ENCODE measurements at regions of chr18 and their contacts with region 1.

Region 1: DNA sequence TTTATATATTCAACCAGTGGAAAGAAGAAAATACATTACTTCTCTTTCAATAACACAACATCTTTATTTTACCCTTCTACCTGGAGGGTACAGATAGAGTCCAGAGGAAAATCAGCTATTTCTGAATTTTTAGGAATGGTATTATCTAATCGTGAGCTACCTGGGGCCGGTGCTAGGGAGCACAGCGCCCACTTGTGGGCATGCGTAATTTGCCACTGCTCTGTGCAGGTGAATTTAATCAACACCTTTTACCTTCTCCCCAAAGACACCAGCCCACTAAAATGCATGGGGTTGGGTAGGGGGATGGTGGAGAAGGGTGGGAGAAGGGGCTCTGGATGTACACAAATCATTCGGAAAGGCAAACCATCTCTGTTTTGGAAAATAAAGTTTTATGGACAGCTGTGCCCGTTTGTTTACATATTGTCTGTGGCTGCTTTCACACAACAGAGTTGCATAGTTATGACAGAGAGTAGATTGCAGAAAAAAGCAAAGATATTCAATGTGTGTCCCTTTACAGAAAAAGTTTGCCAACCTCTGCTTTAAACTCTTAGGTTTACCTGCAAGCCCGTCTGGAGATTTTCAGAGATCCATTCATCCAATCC is 51.5 kb upstream of the DCC start:
- DNase-seq: peak; percentile 13
- ATAC-seq: no peak
- H3K4me3 ChIP-seq: no peak overlapping the region
- H3K4me3 Mint-ChIP-seq: no peak overlapping the region
- H3K27ac ChIP-seq: no peak overlapping the region
- H3K27ac Mint-ChIP-seq: no peak overlapping the region
- H3K4me1 ChIP-seq: no peaks in the 10 kb centered on the region
- H3K4me1 Mint-ChIP-seq: no peaks in the 10 kb centered on the region
- H3K27me3 ChIP-seq: no peaks in the 10 kb centered on the region
- H3K27me3 Mint-ChIP-seq: no peaks in the 10 kb centered on the region
- CTCF ChIP-seq: peak; percentile 56

Region 2: DNA sequence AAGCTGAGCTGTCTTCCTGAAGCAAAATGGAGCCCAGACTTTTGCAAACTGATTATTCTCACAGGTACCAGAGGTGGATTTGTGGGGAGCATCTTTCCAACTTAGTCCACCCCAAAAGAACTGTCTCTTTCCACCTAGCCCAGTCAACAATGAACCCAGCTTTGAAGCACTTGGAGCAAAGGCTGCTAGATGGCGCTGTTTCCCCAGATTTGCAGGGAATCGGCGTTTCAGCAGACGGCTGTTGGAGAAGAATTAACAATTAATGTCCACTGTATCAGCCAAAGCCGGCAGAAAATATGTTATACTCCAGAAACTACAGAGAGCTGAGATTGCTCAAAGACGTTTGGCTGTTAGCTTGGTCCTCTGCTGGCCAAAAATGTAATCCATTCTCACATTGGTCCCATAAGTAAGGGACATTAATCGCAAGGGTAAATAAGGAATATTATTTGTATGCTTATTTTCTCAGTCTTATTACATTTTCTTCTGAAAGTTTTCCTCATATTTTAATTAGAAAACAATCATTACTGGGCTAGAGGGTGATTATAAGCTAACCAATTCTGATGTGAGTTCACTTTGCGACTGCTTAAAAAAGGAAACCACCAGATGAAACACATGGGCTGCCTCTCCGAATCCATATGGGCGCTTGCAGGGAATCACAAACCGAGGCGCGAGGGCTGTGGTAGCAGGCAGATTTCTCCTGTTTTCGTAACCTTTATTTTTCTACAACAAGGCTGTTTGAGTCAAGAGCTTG is 667.2 kb before region 1 on chr18:
- CTCF ChIA-PET with region 1: no interaction called
- POLR2A ChIA-PET with region 1: no interaction called
- intact Hi-C with region 1: loop called (anchors 5 kb)
- DNase-seq: peak; percentile 11
- ATAC-seq: no peak
- H3K4me3 ChIP-seq: no peak overlapping the region
- H3K4me3 Mint-ChIP-seq: no peak overlapping the region
- H3K27ac ChIP-seq: no peak overlapping the region
- H3K27ac Mint-ChIP-seq: no peak overlapping the region
- H3K4me1 ChIP-seq: no peaks in the 10 kb centered on the region
- H3K4me1 Mint-ChIP-seq: no peaks in the 10 kb centered on the region
- H3K27me3 ChIP-seq: peaks cover 0 to 12% (median 2%) of the 10 kb centered on the region in 4 experiments
- H3K27me3 Mint-ChIP-seq: peaks cover 49% of the 10 kb centered on the region
- CTCF ChIP-seq: peak; percentile 34

Region 3: DNA sequence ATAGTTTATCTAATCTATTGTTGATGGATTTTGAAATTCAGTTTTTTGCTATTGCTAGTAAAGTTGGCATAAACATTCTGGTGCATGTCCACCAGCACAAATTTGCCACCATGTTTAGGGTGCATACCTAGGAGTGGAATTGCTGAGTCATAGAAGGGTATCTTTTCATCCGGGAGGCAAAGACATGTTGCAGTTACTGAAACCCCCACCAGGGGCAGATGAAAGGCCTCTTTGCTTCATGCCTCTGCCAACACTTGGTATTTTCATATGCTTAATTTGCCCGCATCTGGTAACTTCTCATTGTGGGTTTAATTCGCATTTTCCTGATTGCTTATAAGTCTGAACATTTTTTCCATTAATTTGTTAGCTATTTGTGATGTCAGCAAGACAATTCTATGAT is 59.7 kb after region 1 on chr18:
- CTCF ChIA-PET with region 1: no interaction called
- POLR2A ChIA-PET with region 1: no interaction called
- intact Hi-C with region 1: no loop called
- DNase-seq: no peak
- ATAC-seq: no peak
- H3K4me3 ChIP-seq: no peak overlapping the region
- H3K4me3 Mint-ChIP-seq: no peak overlapping the region
- H3K27ac ChIP-seq: no peak overlapping the region
- H3K27ac Mint-ChIP-seq: no peak overlapping the region
- H3K4me1 ChIP-seq: no peaks in the 10 kb centered on the region
- H3K4me1 Mint-ChIP-seq: no peaks in the 10 kb centered on the region
- H3K27me3 ChIP-seq: peaks cover 0 to 4% (median 0%) of the 10 kb centered on the region in 4 experiments
- H3K27me3 Mint-ChIP-seq: no peaks in the 10 kb centered on the region
- CTCF ChIP-seq: no peak

Region 4: DNA sequence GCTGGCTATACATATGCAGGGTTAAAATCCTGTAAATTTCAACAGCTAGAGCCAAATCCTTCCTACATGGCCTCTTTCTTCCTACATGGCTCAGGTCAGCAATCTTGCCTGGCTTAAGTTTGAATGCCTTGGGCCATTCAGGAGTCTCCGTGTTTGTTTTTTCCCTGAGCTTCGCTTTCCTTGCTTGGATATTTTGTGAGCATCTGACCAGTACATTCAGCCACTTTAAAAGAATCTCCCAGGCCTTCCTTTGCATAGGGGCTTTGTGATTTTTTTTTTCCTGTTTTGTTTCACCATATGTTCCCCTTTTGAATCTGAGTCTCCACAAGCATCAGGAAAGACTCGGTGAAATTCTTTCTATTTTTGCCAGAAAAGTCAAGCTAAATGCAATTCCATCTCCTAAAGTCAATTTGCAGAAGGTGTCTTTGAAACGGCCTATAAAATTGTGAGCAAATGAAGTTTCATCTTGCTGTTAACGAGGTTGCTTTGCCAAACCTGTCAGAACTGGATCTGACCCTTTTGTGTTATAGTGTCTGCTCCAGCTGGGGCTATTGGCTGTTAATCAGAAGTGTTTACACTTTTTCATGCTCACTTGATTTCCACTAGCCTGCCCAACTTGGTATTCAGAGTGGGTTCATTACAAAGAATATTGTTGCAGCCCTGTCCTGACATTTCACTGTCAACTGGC is 308.4 kb after region 1 on chr18:
- CTCF ChIA-PET with region 1: no interaction called
- POLR2A ChIA-PET with region 1: no interaction called
- intact Hi-C with region 1: no loop called
- DNase-seq: no peak
- ATAC-seq: no peak
- H3K4me3 ChIP-seq: no peak overlapping the region
- H3K4me3 Mint-ChIP-seq: no peak overlapping the region
- H3K27ac ChIP-seq: no peak overlapping the region
- H3K27ac Mint-ChIP-seq: no peak overlapping the region
- H3K4me1 ChIP-seq: no peaks in the 10 kb centered on the region
- H3K4me1 Mint-ChIP-seq: no peaks in the 10 kb centered on the region
- H3K27me3 ChIP-seq: no peaks in the 10 kb centered on the region
- H3K27me3 Mint-ChIP-seq: no peaks in the 10 kb centered on the region
- CTCF ChIP-seq: no peak